ENCODE measurements at regions of chr7 and their contacts with region 1.

Region 1: DNA sequence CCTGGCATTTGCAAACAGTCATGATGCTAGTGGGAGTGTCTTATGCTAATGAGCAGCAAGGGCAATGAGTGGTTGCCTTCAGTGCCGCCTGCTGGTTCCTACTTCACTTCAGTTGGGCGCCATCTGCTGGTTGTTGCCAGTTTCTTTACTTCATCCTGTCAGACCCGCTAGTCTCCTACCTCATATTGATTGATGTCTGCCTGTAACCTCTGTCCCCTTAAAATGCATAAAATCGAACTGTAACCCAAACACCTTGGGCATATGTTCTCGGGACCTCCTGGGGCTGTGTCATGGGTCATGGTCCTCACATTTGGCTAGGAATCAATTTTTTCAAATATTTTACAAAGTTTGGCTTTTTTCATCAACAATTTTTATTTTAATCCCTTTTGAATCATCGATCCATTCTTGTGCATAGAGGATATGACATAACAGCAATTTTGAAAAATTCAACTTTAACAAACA is 62.8 kb upstream of the C7orf33 start:
- DNase-seq: peak; percentile 90
- ATAC-seq: peak; percentile 97
- H3K4me3 ChIP-seq: no peak overlapping the region
- H3K4me3 Mint-ChIP-seq: no peak overlapping the region
- H3K27ac ChIP-seq: no peak overlapping the region
- H3K27ac Mint-ChIP-seq: no peak overlapping the region
- H3K4me1 ChIP-seq: no peaks in the 10 kb centered on the region
- H3K4me1 Mint-ChIP-seq: peaks cover 14% of the 10 kb centered on the region
- H3K27me3 ChIP-seq: no peaks in the 10 kb centered on the region
- H3K27me3 Mint-ChIP-seq: no peaks in the 10 kb centered on the region
- CTCF ChIP-seq: peak; percentile 86

Region 2: DNA sequence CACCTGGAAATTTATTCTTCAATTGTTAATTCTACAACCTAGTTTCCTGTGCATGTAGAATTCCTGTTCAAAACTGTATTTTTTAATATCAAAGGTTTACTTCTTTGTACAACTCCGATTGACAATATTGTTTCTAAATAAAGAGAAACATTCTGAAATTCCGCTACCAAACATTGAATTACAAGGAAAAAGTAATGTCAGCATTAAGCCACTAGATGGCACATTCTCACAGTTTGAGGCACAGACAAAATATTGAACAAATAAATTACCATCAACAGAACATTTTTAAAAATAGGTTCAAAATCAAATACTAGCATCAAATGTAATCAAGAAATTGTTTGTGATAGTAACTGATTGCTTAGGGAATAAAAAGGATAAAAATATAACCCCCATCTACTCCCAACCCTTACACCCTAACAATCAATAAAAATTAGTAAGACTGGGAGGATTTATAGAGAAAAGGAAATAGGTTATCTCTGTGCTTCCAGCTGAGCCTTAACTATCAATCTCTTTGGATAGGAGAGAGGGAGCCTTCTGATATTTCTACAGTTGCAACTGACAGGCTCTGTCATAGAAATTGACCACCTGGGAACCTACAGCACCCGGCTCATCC is 23.8 kb before region 1 on chr7:
- CTCF ChIA-PET with region 1: interaction called, 17 read pairs
- POLR2A ChIA-PET with region 1: no interaction called
- intact Hi-C with region 1: loop called (anchors 1 kb)
- DNase-seq: peak; percentile 61
- ATAC-seq: no peak
- H3K4me3 ChIP-seq: no peak overlapping the region
- H3K4me3 Mint-ChIP-seq: no peak overlapping the region
- H3K27ac ChIP-seq: no peak overlapping the region
- H3K27ac Mint-ChIP-seq: no peak overlapping the region
- H3K4me1 ChIP-seq: peaks cover 11 to 23% of the 10 kb centered on the region in 2 donors
- H3K4me1 Mint-ChIP-seq: peaks cover 47% of the 10 kb centered on the region
- H3K27me3 ChIP-seq: no peaks in the 10 kb centered on the region
- H3K27me3 Mint-ChIP-seq: no peaks in the 10 kb centered on the region
- CTCF ChIP-seq: peak; percentile 97

Region 3: GRCh38 chr7:148545932-148546331 is 18.2 kb after region 1 on chr7:
- CTCF ChIA-PET with region 1: no interaction called
- POLR2A ChIA-PET with region 1: no interaction called
- intact Hi-C with region 1: no loop called
- DNase-seq: no peak
- ATAC-seq: no peak
- H3K4me3 ChIP-seq: no peak overlapping the region
- H3K4me3 Mint-ChIP-seq: no peak overlapping the region
- H3K27ac ChIP-seq: no peak overlapping the region
- H3K27ac Mint-ChIP-seq: no peak overlapping the region
- H3K4me1 ChIP-seq: no peaks in the 10 kb centered on the region
- H3K4me1 Mint-ChIP-seq: no peaks in the 10 kb centered on the region
- H3K27me3 ChIP-seq: no peaks in the 10 kb centered on the region
- H3K27me3 Mint-ChIP-seq: no peaks in the 10 kb centered on the region
- CTCF ChIP-seq: no peak